Posterior cingulate gyrus (tissue), 11 donors: ENCODE measurements at regions of chr14 and their contacts with region 1.

Region 1: GRCh38 chr14:62126879-62127478 is 364.8 kb downstream of the SNAPC1 start:
- DNase-seq: no peak

Region 2: DNA sequence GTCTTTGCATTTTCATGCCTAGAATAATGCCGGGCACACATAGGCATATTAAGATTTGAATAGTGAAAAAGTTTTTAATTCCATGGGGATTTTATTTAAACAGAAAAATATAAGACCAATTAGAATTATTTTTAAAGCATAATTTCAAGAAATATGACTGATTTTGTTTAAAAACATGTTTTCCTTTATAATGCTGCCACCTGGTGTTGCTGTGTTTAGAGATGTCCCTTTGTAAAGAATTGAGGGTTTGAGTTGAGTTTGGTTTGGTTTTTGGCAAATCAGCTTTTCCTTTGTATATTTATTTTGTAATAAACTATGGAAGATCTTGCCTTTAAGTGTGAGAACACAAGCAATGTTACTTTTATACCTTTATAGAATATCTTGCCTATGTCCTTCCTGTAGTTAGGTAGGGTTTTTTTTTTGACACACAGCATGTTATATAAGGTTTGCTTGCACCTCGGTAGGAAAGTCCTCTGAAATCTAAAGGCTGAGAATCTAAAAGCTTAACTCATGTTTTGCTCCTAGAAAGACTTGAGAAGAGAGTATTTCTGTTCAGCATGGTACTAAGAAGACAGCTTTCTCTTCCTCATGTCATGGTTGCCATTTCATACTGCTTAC is 396.1 kb before region 1 on chr14:
- intact Hi-C with region 1: loop called (anchors 10 kb)
- DNase-seq: no peak

Region 3: DNA sequence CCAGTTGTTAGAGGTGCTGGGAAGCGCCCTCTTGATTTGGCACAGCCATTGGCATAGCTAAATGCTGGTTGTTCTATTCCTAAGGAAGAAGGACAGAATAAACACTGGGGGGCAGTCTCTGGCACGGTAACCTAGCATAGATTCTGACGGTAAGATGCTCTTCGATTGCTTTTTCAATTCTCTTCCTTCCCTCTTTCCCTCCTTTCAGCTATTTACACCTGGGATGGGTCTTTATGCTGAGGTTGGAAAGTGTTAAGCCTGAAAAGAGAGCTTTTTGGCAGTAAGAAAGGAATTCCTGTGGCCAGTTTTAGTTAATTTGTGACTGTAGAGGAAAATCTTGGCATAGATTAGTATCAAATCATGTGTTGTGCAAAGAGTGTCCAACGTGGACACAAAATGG is 201.9 kb before region 1 on chr14:
- intact Hi-C with region 1: loop called (anchors 1 kb)
- DNase-seq: peak in 3 of 10 donors; percentile 14 to 27 (median 24)